Activated CD4-positive, alpha-beta T cell treated with anti-CD3 and anti-CD28 coated beads for 36 hours (primary cell): ENCODE measurements at regions of chr10 and their contacts with region 1.

Region 1: DNA sequence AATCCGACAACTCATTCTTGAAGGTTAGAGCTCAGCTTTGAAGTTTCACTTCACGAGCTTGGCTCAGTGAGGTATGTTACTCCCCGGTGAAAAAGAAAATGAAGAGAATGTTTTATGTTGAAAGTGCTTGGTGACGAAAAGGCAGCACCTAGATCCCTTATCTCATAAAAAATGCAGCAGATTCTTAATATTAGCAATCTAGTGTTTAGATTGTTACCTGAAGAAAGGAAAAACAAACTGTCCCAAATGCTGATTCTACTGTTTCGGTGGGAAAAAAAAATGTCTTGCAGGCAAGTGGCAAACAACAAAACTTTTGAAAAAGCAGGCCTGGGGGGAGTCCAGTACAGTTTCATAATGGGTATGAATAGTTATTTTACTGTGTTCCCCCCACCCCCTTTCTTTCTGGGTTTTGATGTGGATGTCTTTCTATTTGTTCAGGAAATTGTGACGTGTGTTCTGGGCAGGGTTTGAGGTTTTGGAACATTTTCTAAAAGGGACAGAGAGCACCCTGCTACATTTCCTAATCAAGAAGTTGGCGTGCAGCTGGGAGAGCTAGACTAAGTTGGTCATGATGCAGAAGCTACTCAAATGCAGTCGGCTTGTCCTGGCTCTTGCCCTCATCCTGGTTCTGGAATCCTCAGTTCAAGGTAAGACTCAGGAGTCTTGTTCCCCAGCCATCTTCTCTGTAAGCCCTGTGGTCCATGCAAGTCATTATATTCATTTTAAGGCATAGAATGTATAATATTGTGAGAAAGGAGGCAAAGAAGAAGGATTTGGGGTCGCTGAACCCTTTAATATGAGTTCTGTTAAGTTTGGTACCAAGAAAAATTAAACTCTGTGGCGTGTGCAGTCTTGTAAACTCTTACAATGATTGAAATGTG is at the start of gene SRGN:
- DNase-seq: peak; percentile 87
- ATAC-seq: peak; percentile 57
- H3K4me3 Mint-ChIP-seq: peak within 1 kb of the TSS; percentile 86
- H3K27ac Mint-ChIP-seq: peak within 1 kb of the TSS; percentile 99
- H3K4me1 Mint-ChIP-seq: peaks cover 55% of the 10 kb centered on the region
- H3K27me3 Mint-ChIP-seq: no peaks in the 10 kb centered on the region
- total RNA-seq, gene SRGN: 375 to 400 TPM

Region 2: GRCh38 chr10:68955832-68956532 is 131.8 kb before region 1 on chr10 and contains the start of gene DDX21:
- CTCF ChIA-PET with region 1: interaction called, 4 read pairs
- POLR2A ChIA-PET with region 1: interaction called, 12 read pairs
- intact Hi-C with region 1: loop called (anchors 1 kb)
- DNase-seq: peak; percentile 94
- ATAC-seq: peak; percentile 85
- H3K4me3 Mint-ChIP-seq: peak within 1 kb of the TSS; percentile 98
- H3K27ac Mint-ChIP-seq: peak within 1 kb of the TSS; percentile 100
- H3K4me1 Mint-ChIP-seq: peaks cover 35% of the 10 kb centered on the region
- H3K27me3 Mint-ChIP-seq: no peaks in the 10 kb centered on the region
- total RNA-seq, gene DDX21: 187 to 192 TPM

Region 3: DNA sequence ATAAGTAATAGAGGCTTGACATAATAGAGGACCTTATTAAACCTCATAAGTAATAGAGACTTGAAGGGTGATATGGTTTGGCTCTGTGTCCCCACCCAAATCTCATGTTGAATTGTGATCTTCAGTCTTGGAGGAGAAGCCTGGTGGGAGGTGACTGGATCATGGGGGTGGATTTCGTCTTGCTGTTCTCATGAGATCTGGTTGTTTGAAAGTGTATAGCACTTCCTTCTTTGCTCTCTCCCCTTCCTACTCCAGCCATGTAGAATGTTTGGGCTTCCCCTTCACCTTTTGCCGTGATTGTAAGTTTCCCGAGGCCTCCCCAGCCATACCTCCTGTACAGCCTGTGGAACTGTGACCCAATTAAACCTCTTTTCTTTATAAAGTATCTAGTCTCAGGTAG is 90.6 kb before region 1 on chr10:
- CTCF ChIA-PET with region 1: interaction called, 10 read pairs
- POLR2A ChIA-PET with region 1: interaction called, 7 read pairs
- intact Hi-C with region 1: loop called (anchors 2 kb)
- DNase-seq: no peak
- ATAC-seq: peak; percentile 10
- H3K4me3 Mint-ChIP-seq: peak overlapping the region; percentile 13
- H3K27ac Mint-ChIP-seq: peak overlapping the region; percentile 96
- H3K4me1 Mint-ChIP-seq: peaks cover 45% of the 10 kb centered on the region
- H3K27me3 Mint-ChIP-seq: no peaks in the 10 kb centered on the region

Region 4: DNA sequence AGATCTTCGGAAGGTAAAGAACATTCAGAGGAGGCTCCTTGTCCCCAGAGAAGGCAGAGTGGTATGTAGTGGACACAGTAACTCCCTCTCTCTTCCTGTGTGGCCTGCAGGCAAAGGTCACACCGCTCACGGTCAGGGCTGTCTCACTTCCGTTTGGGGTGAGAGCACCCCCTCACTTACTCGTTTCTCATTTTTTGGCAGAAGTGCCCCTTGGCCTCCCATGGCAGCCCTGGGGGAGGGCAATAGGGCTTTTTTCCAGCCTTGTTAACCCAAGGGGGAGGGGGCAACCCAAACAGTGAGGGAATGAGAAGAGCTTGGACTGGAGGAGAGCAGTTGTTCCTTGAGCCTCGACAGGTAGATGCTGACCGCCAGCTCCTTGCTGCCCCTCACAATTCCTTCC is 31.7 kb before region 1 on chr10:
- CTCF ChIA-PET with region 1: interaction called, 4 read pairs
- POLR2A ChIA-PET with region 1: interaction called, 14 read pairs
- intact Hi-C with region 1: loop called (anchors 1 kb)
- DNase-seq: peak; percentile 34
- ATAC-seq: no peak
- H3K4me3 Mint-ChIP-seq: no peak overlapping the region
- H3K27ac Mint-ChIP-seq: peak overlapping the region; percentile 82
- H3K4me1 Mint-ChIP-seq: peaks cover 55% of the 10 kb centered on the region
- H3K27me3 Mint-ChIP-seq: no peaks in the 10 kb centered on the region

Region 5: GRCh38 chr10:69061305-69062161 is 26.3 kb before region 1 on chr10:
- CTCF ChIA-PET with region 1: interaction called, 25 read pairs
- POLR2A ChIA-PET with region 1: interaction called, 54 read pairs
- intact Hi-C with region 1: loop called (anchors 1 kb)
- DNase-seq: peak; percentile 51
- ATAC-seq: peak; percentile 34
- H3K4me3 Mint-ChIP-seq: peak overlapping the region; percentile 67
- H3K27ac Mint-ChIP-seq: peak overlapping the region; percentile 89
- H3K4me1 Mint-ChIP-seq: peaks cover 60% of the 10 kb centered on the region
- H3K27me3 Mint-ChIP-seq: peaks cover 2% of the 10 kb centered on the region

Region 6: DNA sequence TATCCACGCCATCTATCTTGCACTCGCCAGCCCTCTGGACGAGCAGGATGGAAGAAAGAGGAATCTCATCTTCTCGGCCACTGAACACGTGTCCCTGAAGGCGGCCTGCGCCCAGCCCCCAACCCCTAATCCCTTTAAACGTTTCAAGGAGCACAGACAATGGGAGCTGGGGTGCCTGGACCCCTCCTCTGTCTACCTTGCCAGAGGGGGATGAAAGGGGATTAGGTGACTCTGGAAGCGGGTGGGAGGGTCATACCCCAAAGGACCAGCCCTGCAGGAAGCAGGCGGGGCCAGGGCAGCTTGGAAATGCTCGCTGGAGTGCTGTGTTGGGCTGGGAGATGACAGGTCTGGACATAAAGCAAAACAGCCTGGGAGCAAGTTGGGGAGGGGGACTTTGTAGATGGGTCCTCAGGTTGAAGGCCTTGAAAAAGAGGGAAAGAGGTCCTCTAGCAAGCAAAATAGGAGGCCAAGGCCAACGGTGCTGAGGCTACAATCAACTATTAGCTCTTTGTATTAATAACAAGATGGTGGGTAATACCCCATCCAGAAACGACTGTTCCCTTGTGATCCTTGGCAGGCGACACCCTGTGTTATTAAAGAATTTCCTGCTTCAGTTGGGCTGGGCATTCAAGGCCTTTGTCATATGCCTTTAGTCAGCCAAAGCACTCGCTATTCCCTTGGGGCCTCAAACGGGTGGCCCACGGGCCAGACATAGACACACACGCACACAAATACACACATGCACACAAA is 1998.0 kb after region 1 on chr10:
- CTCF ChIA-PET with region 1: no interaction called
- POLR2A ChIA-PET with region 1: no interaction called
- intact Hi-C with region 1: no loop called
- DNase-seq: no peak
- ATAC-seq: no peak
- H3K4me3 Mint-ChIP-seq: no peak overlapping the region
- H3K27ac Mint-ChIP-seq: no peak overlapping the region
- H3K4me1 Mint-ChIP-seq: no peaks in the 10 kb centered on the region
- H3K27me3 Mint-ChIP-seq: peaks cover 4% of the 10 kb centered on the region